Activated T-helper 1 cell treated with anti-CD3 and anti-CD28 coated beads, Interleukin-12 subunit alpha, Interleukin-12 subunit beta, Interleukin-2, Interleukin-4 antibody, amounts not matched to agents 30 ng/mL and 10 ng/mL and 1 ng/mL, durations not matched to agents 14 hours and 24 hours and 36 hours (primary cell): ENCODE measurements at regions of chr17 and their contacts with region 1.

Region 1: DNA sequence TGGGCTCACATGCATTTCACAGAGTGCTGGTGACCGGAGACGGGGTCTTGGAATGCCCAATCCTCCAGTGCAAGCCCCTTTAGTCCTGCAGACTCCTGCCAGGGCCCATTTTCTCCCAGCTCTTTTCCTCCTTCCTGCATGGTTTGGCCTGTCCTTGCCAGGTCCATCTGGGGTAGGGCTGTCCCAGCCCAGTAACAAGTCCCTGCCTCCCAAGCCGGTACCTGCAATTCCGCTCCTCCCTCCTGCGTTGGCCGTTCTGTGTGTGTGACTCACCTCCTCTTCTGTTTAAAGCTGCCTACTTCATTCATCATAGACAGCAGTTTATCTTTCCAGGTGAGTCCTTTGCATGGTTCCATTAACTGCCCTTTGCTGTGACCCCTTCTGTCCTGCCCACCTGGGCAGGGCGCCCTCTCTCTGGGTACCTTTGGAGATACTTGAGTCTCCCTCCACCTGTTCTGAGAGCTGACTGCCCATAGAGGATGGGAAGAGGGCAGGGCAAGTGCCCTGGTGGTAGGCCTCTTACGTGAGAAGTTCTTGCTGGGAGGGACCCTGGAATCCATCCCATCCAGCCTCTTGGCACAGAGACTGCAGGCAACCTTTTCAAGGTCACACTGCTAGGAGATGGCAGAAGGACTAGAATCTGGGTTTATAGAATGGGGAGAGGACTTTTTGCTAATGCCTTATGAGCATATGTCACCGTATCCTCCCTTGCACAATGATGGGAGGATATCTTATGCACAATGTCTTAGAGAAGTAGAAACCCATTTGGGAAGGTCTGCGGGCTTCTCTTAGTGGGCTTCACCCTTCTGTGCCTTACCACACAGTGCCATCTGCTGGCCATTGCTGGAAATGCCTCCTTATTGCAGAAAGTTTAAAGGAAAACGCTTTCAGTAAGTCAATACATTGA is 29.7 kb upstream of the LGALS9 start:
- DNase-seq: peak; percentile 68
- H3K4me3 Mint-ChIP-seq: no peak overlapping the region
- H3K27ac Mint-ChIP-seq: no peak overlapping the region
- H3K4me1 Mint-ChIP-seq: peaks cover 30% of the 10 kb centered on the region
- H3K27me3 Mint-ChIP-seq: no peaks in the 10 kb centered on the region

Region 2: GRCh38 chr17:27293898-27294688 is 307.2 kb before region 1 on chr17 and contains the start of gene WSB1:
- intact Hi-C with region 1: loop called (anchors 1 kb)
- DNase-seq: peak; percentile 89
- H3K4me3 Mint-ChIP-seq: peak within 1 kb of the TSS; percentile 97
- H3K27ac Mint-ChIP-seq: peak within 1 kb of the TSS; percentile 98
- H3K4me1 Mint-ChIP-seq: peaks cover 37% of the 10 kb centered on the region
- H3K27me3 Mint-ChIP-seq: no peaks in the 10 kb centered on the region
- total RNA-seq, gene WSB1: 90.3 and 102 TPM in 2 replicates

Region 3: DNA sequence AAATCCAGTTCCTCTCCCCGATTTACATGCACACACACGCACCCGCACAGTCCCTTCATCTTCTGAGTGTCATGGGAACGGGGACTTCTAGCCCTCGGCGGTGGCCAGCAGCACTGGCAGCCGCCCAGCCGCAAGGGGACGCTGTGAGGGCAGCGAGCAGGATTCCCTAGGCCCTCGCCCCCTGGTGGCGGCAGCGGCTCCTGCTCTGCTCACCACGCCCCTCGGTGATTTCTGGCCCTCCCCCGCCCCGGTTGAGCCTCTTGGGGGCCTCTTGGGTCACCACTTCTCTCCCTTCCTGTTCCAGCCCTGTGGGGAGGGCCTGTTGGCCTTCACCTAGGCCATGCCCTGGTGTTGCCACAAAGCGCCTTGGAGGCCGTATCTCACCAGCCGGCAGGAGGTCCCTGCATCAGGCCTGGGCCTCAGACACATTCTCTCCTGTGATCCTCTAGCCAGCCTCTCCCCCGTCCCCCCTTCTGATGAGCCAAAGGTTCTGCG is 220.3 kb before region 1 on chr17:
- intact Hi-C with region 1: loop called (anchors 1 kb)
- DNase-seq: peak; percentile 72
- H3K4me3 Mint-ChIP-seq: no peak overlapping the region
- H3K27ac Mint-ChIP-seq: no peak overlapping the region
- H3K4me1 Mint-ChIP-seq: peaks cover 7% of the 10 kb centered on the region
- H3K27me3 Mint-ChIP-seq: peaks cover 29% of the 10 kb centered on the region

Region 4: GRCh38 chr17:27526604-27527230 is 74.6 kb before region 1 on chr17:
- intact Hi-C with region 1: loop called (anchors 5 kb)
- DNase-seq: peak; percentile 54
- H3K4me3 Mint-ChIP-seq: peak overlapping the region; percentile 68
- H3K27ac Mint-ChIP-seq: peak overlapping the region; percentile 76
- H3K4me1 Mint-ChIP-seq: peaks cover 94% of the 10 kb centered on the region
- H3K27me3 Mint-ChIP-seq: no peaks in the 10 kb centered on the region

Region 5: DNA sequence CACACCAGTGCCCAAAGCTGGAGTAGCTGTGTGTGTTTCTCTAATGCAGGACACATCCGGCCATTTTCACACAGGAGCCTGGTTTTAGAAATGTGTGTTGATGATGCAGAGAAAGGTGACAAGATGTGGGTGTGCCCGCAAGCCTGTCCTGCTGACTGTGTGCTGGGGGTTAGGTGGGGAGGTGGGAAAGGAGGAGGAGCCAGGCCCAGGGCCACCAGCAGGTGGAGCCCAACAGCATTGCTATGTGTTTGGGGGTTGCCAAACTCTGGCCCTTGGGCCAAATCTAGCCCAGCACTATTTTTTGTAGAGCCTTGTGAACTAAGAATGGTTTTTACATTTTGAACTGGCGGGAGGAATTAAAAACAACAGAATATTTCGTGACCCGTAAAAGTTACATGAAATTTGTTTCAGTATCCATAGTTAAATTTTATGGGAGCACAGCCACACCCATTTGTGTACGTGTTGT is 32.0 kb before region 1 on chr17:
- intact Hi-C with region 1: loop called (anchors 2 kb)
- DNase-seq: peak; percentile 26
- H3K4me3 Mint-ChIP-seq: no peak overlapping the region
- H3K27ac Mint-ChIP-seq: peak overlapping the region; percentile 70
- H3K4me1 Mint-ChIP-seq: peaks cover 90% of the 10 kb centered on the region
- H3K27me3 Mint-ChIP-seq: no peaks in the 10 kb centered on the region

Region 6: GRCh38 chr17:27654654-27655524 is 53.6 kb after region 1 on chr17:
- intact Hi-C with region 1: loop called (anchors 1 kb)
- DNase-seq: peak; percentile 49
- H3K4me3 Mint-ChIP-seq: no peak overlapping the region
- H3K27ac Mint-ChIP-seq: no peak overlapping the region
- H3K4me1 Mint-ChIP-seq: peaks cover 13% of the 10 kb centered on the region
- H3K27me3 Mint-ChIP-seq: no peaks in the 10 kb centered on the region

Region 7: DNA sequence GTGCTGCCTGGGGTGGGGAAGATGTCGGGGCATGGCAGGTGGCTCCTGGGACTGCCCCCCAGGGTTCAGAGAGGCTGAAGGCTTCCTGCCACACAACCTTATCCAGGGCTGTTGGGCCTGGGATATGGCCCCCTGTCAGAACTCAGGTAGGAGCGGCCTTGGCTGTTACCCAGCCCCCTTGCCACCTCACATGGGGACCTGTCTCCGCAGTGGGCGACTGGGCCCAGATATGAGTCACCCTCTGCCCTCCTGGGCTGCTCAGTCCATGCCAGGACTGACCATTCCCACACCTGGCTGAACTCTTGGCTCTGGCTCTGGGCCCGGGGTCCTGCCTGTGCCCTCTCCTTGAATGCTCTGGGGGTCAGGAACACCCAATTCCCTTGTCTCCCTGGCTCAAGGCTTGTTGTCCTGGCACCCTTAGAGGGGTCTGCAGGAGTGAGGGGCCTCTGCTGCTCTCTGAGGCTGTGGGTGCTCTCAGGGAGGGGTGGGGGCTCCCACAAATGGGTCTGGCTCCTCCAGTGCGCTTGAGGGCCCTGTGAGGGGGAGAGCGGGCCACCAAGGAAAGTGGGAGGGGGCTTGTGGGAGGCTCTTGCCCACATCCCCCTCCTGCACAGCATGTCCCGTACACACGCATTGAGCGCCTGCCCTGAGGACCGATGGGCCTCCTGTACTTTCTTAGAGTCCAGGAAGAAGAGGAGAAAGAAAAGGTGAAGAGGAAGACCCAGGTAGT is 65.7 kb after region 1 on chr17:
- intact Hi-C with region 1: no loop called
- DNase-seq: no peak
- H3K4me3 Mint-ChIP-seq: no peak overlapping the region
- H3K27ac Mint-ChIP-seq: no peak overlapping the region
- H3K4me1 Mint-ChIP-seq: no peaks in the 10 kb centered on the region
- H3K27me3 Mint-ChIP-seq: peaks cover 2% of the 10 kb centered on the region

Region 8: DNA sequence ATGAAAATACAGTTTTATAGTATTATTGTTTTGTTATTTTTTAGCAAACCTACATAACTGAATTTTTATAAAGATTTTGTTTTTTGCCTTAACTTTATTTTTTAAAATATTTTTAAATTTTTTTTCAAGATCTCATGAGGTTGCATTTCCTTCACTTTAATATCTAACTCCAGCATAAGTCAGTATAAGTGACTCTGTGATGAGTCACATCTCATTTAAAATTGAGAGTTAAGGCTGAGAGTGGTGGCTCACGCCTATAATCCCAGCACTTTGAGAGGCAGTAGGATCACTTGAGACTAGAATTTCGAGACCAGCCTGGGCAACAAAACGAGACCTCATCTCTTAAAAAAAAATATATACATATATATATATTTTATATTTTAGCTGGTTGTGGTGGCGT is 485.2 kb after region 1 on chr17:
- intact Hi-C with region 1: no loop called
- DNase-seq: no peak
- H3K4me3 Mint-ChIP-seq: no peak overlapping the region
- H3K27ac Mint-ChIP-seq: no peak overlapping the region
- H3K4me1 Mint-ChIP-seq: peaks cover 12% of the 10 kb centered on the region
- H3K27me3 Mint-ChIP-seq: no peaks in the 10 kb centered on the region